ENCODE measurements at regions of chr21 and their contacts with region 1.

Region 1: GRCh38 chr21:14099570-14099969 is 111.2 kb downstream of the LIPI start:
- DNase-seq: no peak
- ATAC-seq: no peak
- H3K4me3 ChIP-seq: no peak overlapping the region
- H3K27ac ChIP-seq: no peak overlapping the region
- H3K4me1 ChIP-seq: no peaks in the 10 kb centered on the region
- H3K27me3 ChIP-seq: no peaks in the 10 kb centered on the region
- CTCF ChIP-seq: no peak

Region 2: DNA sequence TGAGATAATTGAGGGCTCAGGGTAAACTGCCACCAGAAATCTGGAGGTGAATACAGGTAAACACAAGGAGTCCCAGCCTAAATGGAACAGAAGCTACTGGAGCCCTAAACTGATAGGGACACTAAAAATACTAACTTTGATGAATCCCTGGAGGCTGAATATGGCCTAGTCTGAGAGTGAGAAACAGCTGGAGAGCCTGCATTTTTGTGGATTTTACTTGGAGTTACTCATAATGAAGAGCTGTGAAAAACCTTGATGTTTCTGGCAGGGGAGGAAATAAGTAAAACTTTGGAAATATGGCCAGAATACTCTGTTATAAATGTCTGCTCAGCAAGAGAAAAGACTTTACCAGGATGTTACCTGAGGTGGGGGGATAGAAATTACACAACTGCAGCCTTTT is 53.2 kb before region 1 on chr21:
- intact Hi-C with region 1: loop called in 1 of 10 experiments (anchors 10 kb)
- DNase-seq: no peak
- ATAC-seq: no peak
- H3K4me3 ChIP-seq: no peak overlapping the region
- H3K27ac ChIP-seq: no peak overlapping the region
- H3K4me1 ChIP-seq: no peaks in the 10 kb centered on the region
- H3K27me3 ChIP-seq: no peaks in the 10 kb centered on the region
- CTCF ChIP-seq: no peak

Region 3: GRCh38 chr21:14070020-14070893 is 29.3 kb before region 1 on chr21:
- intact Hi-C with region 1: no loop called
- DNase-seq: peak in 1 of 2 donors; percentile 55
- ATAC-seq: peak in 5 of 8 donors; percentile 25 to 87 (median 44)
- H3K4me3 ChIP-seq: no peak overlapping the region
- H3K27ac ChIP-seq: no peak overlapping the region
- H3K4me1 ChIP-seq: no peaks in the 10 kb centered on the region
- H3K27me3 ChIP-seq: no peaks in the 10 kb centered on the region
- CTCF ChIP-seq: no peak